CD8-positive, alpha-beta T cell (primary cell): ENCODE measurements at regions of chr16 and their contacts with region 1.

Region 1: DNA sequence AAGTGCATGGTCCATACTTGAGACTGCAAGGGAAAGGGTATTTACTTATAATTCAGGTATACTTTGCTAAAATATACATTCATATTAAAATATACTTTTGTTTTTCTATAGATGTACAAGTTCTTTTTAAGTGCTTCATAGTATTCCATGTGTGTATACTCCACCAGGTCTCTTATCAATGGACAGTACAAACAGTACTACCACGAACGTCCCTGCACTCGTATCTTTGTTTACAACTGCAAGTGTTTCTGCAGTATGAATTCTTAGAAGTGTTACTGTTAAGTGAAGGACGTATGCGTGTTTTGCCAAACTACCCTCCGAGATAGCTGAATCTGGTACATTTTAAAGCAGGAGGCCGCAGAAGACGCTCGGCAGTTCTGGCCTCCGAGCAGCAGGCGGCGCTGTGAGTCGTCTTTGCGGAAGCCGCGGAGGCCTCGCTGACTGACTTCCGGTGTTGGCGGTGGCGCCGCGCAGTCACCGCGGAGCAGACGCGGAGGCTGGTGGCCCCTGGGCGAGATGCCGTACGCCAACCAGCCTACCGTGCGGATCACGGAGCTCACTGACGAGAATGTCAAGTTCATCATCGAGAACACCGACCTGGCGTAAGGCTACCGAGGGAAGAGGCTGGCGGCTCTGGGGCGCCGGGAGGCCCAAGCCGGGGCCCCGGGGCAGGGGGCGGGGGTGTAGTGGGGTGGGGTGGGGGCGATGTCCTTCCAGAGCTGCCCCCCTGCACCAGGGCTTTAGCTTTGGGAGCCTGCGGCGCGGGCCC is at the start of gene POLR2C:
- DNase-seq: peak; percentile 90 to 98 (median 94)
- ATAC-seq: peak; percentile 97
- H3K4me3 ChIP-seq: peak within 1 kb of the TSS; percentile 83 to 85
- H3K4me3 Mint-ChIP-seq: peak within 1 kb of the TSS; percentile 99
- H3K27ac ChIP-seq: peak within 1 kb of the TSS; percentile 49 to 62
- H3K27ac Mint-ChIP-seq: peak within 1 kb of the TSS; percentile 98
- H3K4me1 ChIP-seq: peaks cover 21% of the 10 kb centered on the region
- H3K4me1 Mint-ChIP-seq: peaks cover 35% of the 10 kb centered on the region
- H3K27me3 ChIP-seq: no peaks in the 10 kb centered on the region
- H3K27me3 Mint-ChIP-seq: no peaks in the 10 kb centered on the region
- CTCF ChIP-seq: peak; percentile 95
- total RNA-seq, gene POLR2C: 101 to 112 TPM

Region 2: GRCh38 chr16:57422026-57422944 is 40.1 kb before region 1 on chr16:
- CTCF ChIA-PET with region 1: interaction called, 5 read pairs
- POLR2A ChIA-PET with region 1: no interaction called
- intact Hi-C with region 1: loop called in 1 of 2 experiments (anchors 1 kb)
- DNase-seq: no peak
- ATAC-seq: no peak
- H3K4me3 ChIP-seq: no peak overlapping the region
- H3K4me3 Mint-ChIP-seq: no peak overlapping the region
- H3K27ac ChIP-seq: no peak overlapping the region
- H3K27ac Mint-ChIP-seq: no peak overlapping the region
- H3K4me1 ChIP-seq: peaks cover 18% of the 10 kb centered on the region
- H3K4me1 Mint-ChIP-seq: peaks cover 19% of the 10 kb centered on the region
- H3K27me3 ChIP-seq: no peaks in the 10 kb centered on the region
- H3K27me3 Mint-ChIP-seq: no peaks in the 10 kb centered on the region
- CTCF ChIP-seq: no peak

Region 3: GRCh38 chr16:57432989-57433388 is 29.4 kb before region 1 on chr16:
- CTCF ChIA-PET with region 1: interaction called, 4 read pairs
- POLR2A ChIA-PET with region 1: interaction called, 11 read pairs
- intact Hi-C with region 1: no loop called
- DNase-seq: peak in 1 of 9 experiments; percentile 28
- ATAC-seq: peak; percentile 44
- H3K4me3 ChIP-seq: no peak overlapping the region
- H3K4me3 Mint-ChIP-seq: peak overlapping the region; percentile 49
- H3K27ac ChIP-seq: peak overlapping the region in 1 of 2 experiments; percentile 49
- H3K27ac Mint-ChIP-seq: peak overlapping the region; percentile 88
- H3K4me1 ChIP-seq: peaks cover 37% of the 10 kb centered on the region
- H3K4me1 Mint-ChIP-seq: peaks cover 38% of the 10 kb centered on the region
- H3K27me3 ChIP-seq: no peaks in the 10 kb centered on the region
- H3K27me3 Mint-ChIP-seq: no peaks in the 10 kb centered on the region
- CTCF ChIP-seq: no peak

Region 4: GRCh38 chr16:57447186-57447962 is 15.0 kb before region 1 on chr16 and contains the starts of genes CIAPIN1 and COQ9:
- CTCF ChIA-PET with region 1: interaction called, 16 read pairs
- POLR2A ChIA-PET with region 1: interaction called, 48 read pairs
- intact Hi-C with region 1: loop called (anchors 1 kb)
- DNase-seq: peak; percentile 85 to 97 (median 92)
- ATAC-seq: peak; percentile 98
- H3K4me3 ChIP-seq: peak within 1 kb of the TSS; percentile 93 to 96
- H3K4me3 Mint-ChIP-seq: peak within 1 kb of the TSS; percentile 91
- H3K27ac ChIP-seq: peak within 1 kb of the TSS; percentile 79 to 83
- H3K27ac Mint-ChIP-seq: peak within 1 kb of the TSS; percentile 93
- H3K4me1 ChIP-seq: peaks cover 20% of the 10 kb centered on the region
- H3K4me1 Mint-ChIP-seq: peaks cover 53% of the 10 kb centered on the region
- H3K27me3 ChIP-seq: no peaks in the 10 kb centered on the region
- H3K27me3 Mint-ChIP-seq: no peaks in the 10 kb centered on the region
- CTCF ChIP-seq: no peak
- total RNA-seq, gene CIAPIN1: 28.6 to 29.7 TPM
- total RNA-seq, gene COQ9: 8.1 to 11.7 TPM

Region 5: GRCh38 chr16:57475711-57476339 is 13.4 kb after region 1 on chr16:
- CTCF ChIA-PET with region 1: interaction called, 21 read pairs
- POLR2A ChIA-PET with region 1: interaction called, 5 read pairs
- intact Hi-C with region 1: no loop called
- DNase-seq: peak in 8 of 9 experiments; percentile 44 to 84 (median 79)
- ATAC-seq: peak; percentile 98
- H3K4me3 ChIP-seq: peak overlapping the region in 1 of 2 experiments; percentile 21
- H3K4me3 Mint-ChIP-seq: peak overlapping the region; percentile 39
- H3K27ac ChIP-seq: no peak overlapping the region
- H3K27ac Mint-ChIP-seq: no peak overlapping the region
- H3K4me1 ChIP-seq: peaks cover 15% of the 10 kb centered on the region
- H3K4me1 Mint-ChIP-seq: peaks cover 13% of the 10 kb centered on the region
- H3K27me3 ChIP-seq: no peaks in the 10 kb centered on the region
- H3K27me3 Mint-ChIP-seq: no peaks in the 10 kb centered on the region
- CTCF ChIP-seq: peak; percentile 87

Region 6: DNA sequence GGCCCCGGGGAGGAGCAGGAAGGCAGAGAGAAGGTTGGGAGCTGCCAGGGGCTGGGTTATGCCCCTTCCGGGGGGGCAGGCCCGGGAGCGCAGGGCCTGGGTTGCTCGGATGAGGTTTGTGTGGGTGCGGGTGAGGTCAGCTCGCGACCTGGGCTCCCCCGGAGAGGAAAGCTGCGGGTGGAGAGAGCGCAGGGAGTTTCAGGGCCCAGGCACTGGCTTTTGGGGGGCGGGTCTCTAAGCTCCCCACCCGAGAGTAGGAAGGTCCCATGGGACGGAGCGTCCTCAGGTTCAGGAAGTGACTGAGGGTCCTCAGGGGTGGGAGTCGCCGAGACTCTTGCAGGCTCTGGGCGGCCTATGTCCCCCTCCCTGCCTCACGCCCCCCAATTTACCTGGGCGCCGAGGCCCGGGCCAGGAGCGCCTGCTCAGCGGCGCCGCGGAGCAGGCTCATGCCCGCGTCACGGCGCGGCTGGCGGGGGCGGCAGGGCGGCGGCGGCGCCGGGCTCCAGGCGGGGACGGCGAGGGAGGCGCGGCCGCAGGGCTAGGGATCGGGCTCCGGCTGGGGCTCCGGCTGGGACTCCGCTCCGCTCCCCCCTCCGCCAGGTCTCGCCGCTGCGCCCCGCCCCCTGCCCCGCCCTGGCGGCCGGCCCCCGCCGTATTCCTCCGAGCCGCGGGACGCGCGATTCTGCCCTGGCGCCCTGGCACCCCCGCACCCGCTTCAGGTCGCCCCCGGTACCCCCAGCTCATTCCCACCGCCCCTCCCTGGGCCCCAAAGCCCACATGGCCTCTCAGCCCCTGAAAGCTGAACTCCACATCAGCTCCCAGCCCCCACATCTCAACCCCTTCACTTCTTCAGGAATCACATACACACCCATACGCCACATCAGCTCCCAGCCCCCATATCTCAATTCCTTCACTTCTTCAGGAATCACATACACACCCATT is 23.8 kb after region 1 on chr16 and contains the start of gene DOK4:
- CTCF ChIA-PET with region 1: interaction called, 8 read pairs
- POLR2A ChIA-PET with region 1: interaction called, 11 read pairs
- intact Hi-C with region 1: loop called in 1 of 2 experiments (anchors 1 kb)
- DNase-seq: peak; percentile 60 to 86 (median 77)
- ATAC-seq: peak; percentile 97
- H3K4me3 ChIP-seq: peak within 1 kb of the TSS; percentile 68 to 72
- H3K4me3 Mint-ChIP-seq: peak within 1 kb of the TSS; percentile 86
- H3K27ac ChIP-seq: no peak within 1 kb of the TSS
- H3K27ac Mint-ChIP-seq: peak within 1 kb of the TSS; percentile 69
- H3K4me1 ChIP-seq: peaks cover 18% of the 10 kb centered on the region
- H3K4me1 Mint-ChIP-seq: peaks cover 25% of the 10 kb centered on the region
- H3K27me3 ChIP-seq: no peaks in the 10 kb centered on the region
- H3K27me3 Mint-ChIP-seq: no peaks in the 10 kb centered on the region
- CTCF ChIP-seq: no peak
- total RNA-seq, gene DOK4: 1.7 to 1.9 TPM

Region 7: DNA sequence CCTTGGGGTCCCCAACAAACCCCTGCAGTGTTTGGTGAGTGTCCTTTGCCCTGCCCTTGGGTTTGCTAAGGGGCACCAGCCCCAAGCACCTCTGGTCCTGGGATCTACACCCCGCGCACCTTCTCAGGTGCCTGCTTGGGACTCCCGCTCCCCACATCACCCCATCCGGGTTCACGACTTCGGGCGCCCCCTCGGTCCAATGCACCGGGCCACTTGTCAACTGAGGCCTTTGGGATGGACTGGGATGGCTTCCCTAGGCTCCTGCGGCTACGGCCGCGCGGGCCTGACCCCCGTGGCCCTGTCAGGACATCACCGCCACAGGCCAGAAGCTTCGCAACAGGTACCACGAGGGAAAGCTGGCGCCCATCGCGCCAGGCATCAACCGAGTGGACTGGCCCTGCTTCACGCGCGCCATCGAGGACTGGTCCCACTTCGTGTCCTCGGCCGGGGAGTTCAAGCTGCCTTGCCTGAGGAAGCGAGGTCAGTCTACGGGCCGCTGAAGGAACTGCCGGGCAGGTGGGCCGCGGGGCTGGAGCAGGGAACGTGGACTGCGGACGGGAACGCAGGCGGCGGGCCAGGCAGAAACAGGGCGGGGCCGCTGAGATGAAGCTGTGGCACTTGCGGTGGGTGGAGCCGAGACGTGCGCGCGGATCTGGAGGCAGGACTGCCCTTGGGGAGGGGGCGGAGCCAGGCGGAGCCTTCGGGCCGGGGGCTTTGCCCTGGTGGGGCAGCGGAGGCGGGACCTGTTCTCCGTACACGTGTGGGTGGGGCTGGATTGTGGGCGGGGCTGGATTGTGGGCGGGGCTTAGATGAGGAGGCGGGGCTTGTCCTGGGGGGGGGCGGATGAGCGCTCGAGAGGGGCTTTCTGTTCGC is 522.2 kb after region 1 on chr16:
- CTCF ChIA-PET with region 1: no interaction called
- POLR2A ChIA-PET with region 1: no interaction called
- intact Hi-C with region 1: loop called in 1 of 2 experiments (anchors 10 kb)
- DNase-seq: peak; percentile 81 to 96 (median 90)
- ATAC-seq: peak; percentile 96
- H3K4me3 ChIP-seq: peak overlapping the region; percentile 64 to 83
- H3K4me3 Mint-ChIP-seq: peak overlapping the region; percentile 88
- H3K27ac ChIP-seq: peak overlapping the region in 1 of 2 experiments; percentile 36
- H3K27ac Mint-ChIP-seq: peak overlapping the region; percentile 37
- H3K4me1 ChIP-seq: peaks cover 12% of the 10 kb centered on the region
- H3K4me1 Mint-ChIP-seq: peaks cover 16% of the 10 kb centered on the region
- H3K27me3 ChIP-seq: no peaks in the 10 kb centered on the region
- H3K27me3 Mint-ChIP-seq: no peaks in the 10 kb centered on the region
- CTCF ChIP-seq: no peak